GM10248 (cell line): ENCODE measurements at regions of chr18 and their contacts with region 1.

Region 1: GRCh38 chr18:11995445-11996189 is 14.3 kb downstream of the IMPA2 start:
- DNase-seq: peak; percentile 82
- CTCF ChIP-seq: peak; percentile 88

Region 2: GRCh38 chr18:11733031-11733430 is 262.6 kb before region 1 on chr18:
- CTCF ChIA-PET with region 1: interaction called, 38 read pairs
- POLR2A ChIA-PET with region 1: no interaction called
- DNase-seq: peak; percentile 82
- CTCF ChIP-seq: peak; percentile 88

Region 3: GRCh38 chr18:11932393-11932792 is 63.2 kb before region 1 on chr18:
- CTCF ChIA-PET with region 1: interaction called, 324 read pairs
- POLR2A ChIA-PET with region 1: no interaction called
- DNase-seq: no peak
- CTCF ChIP-seq: no peak

Region 4: GRCh38 chr18:11947214-11948191 is 48.1 kb before region 1 on chr18:
- CTCF ChIA-PET with region 1: interaction called, 324 read pairs
- POLR2A ChIA-PET with region 1: no interaction called
- DNase-seq: peak; percentile 69
- CTCF ChIP-seq: no peak

Region 5: GRCh38 chr18:12005538-12006487 is 10.2 kb after region 1 on chr18:
- CTCF ChIA-PET with region 1: interaction called, 36 read pairs
- POLR2A ChIA-PET with region 1: no interaction called
- DNase-seq: no peak
- CTCF ChIP-seq: no peak

Region 6: DNA sequence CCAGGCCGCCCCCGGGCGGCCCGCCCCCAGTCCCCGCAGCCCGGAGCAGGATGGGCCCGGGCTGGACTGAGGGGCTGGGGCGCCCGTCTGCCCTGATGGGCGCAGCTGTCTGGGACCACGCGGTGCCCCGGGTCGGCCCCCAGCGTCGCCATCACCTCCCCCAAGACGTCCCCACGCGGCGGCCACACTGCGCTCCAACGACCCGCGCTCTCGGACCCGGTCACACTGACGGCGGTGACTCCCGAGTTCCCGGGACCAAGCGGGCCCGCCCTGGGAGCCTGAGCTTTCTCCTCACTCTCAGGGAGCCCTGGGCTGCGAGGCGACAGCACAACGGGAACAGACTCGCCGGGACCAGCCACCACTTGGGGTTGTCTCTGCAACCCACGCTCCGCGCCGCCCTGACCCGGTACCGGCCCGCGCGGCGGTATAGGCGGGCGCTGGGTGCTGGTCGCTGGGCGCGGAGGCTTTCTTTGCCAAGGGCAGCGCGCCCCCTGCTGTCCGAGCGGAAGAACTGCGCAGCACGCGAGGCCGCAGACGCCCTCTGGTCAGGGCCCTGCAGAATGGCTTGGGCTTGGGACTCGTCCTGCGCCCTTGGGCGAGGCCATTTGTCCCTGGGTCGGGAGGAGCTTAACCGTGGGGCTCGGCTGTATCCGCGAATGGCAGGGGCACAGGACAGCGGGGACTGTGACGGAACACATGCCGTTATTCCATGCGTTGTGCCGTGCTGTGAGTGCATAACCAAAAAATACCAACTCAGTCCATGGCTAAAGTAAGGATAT is 43.2 kb after region 1 on chr18:
- CTCF ChIA-PET with region 1: interaction called, 22 read pairs
- POLR2A ChIA-PET with region 1: no interaction called
- DNase-seq: peak; percentile 86
- CTCF ChIP-seq: peak; percentile 99